ENCODE measurements at regions of chr3 and their contacts with region 1.

Region 1: GRCh38 chr3:30924763-30925162 is 30.3 kb upstream of the GADL1 start:
- DNase-seq: no peak
- H3K4me3 ChIP-seq: no peak overlapping the region
- H3K27ac ChIP-seq: no peak overlapping the region
- H3K4me1 ChIP-seq: no peaks in the 10 kb centered on the region
- H3K27me3 ChIP-seq: no peaks in the 10 kb centered on the region
- CTCF ChIP-seq: no peak
- EP300 ChIP-seq: no peak
- POLR2A ChIP-seq: no peak

Region 2: GRCh38 chr3:31777092-31777491 is 852.3 kb after region 1 on chr3:
- intact Hi-C with region 1: loop called in 1 of 4 experiments (anchors 10 kb)
- DNase-seq: no peak
- H3K4me3 ChIP-seq: no peak overlapping the region
- H3K27ac ChIP-seq: no peak overlapping the region
- H3K4me1 ChIP-seq: no peaks in the 10 kb centered on the region
- H3K27me3 ChIP-seq: no peaks in the 10 kb centered on the region
- CTCF ChIP-seq: no peak
- EP300 ChIP-seq: no peak
- POLR2A ChIP-seq: no peak

Measured in ovary (tissue), 10 donors.